Activated naive CD4-positive, alpha-beta T cell treated with anti-CD3 and anti-CD28 coated beads for 36 hours (primary cell): ENCODE measurements at regions of chr12 and their contacts with region 1.

Region 1: GRCh38 chr12:48795480-48796455 is 6.9 kb upstream of the ADCY6 start:
- DNase-seq: peak; percentile 74
- H3K4me3 Mint-ChIP-seq: no peak overlapping the region
- H3K27ac Mint-ChIP-seq: no peak overlapping the region
- H3K4me1 Mint-ChIP-seq: no peaks in the 10 kb centered on the region
- H3K27me3 Mint-ChIP-seq: peaks cover 8% of the 10 kb centered on the region

Region 2: DNA sequence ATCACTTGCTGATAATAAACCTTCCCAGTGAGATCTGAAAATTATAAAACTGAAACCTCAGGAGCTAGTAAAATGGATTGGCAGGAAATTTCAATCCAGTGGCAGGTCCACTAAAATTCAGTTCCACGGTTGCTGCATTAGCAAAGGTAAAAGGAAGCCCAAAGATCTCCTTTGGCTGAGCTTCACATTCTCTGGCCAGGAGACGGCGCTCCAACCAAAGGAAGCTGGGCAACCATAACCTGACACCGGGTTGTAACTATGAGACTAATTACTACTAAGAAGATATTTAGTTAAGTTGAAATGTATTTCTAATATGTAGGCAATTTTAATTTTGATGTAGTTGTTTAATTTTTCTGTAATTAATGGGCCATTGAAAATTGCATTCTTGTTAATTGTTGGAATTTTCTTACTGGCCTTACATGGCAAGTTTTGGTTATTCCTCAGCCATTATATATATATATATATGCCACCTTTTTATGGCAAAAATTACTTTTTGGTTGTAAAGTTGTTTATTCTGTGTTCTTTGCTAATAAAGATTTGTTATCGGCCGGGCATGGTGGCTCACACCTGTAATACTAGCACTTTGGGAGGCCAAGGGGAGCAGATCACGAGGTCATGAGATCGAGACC is 253.4 kb before region 1 on chr12:
- CTCF ChIA-PET with region 1: interaction called, 30 read pairs
- intact Hi-C with region 1: loop called (anchors 1 kb)
- DNase-seq: peak; percentile 83
- H3K4me3 Mint-ChIP-seq: no peak overlapping the region
- H3K27ac Mint-ChIP-seq: no peak overlapping the region
- H3K4me1 Mint-ChIP-seq: peaks cover 14% of the 10 kb centered on the region
- H3K27me3 Mint-ChIP-seq: no peaks in the 10 kb centered on the region

Region 3: DNA sequence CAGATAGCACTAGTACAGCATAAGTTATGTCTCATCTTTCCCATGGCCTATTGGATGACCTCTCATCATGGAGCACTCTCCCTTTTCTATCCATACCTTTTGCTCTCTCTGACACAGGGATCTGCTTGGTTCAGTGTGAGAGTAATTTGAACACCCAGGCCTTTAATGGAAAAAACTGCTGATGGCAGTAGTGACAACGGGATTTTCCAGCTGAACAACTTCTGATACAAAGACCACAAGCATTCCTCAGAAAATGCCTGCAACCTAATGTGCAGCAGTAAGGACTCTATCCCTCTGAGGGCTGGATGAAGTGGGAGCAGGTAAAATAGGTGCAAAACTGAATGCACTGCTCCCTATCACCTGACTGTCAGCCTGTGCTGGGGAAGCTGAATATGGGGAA is 164.7 kb before region 1 on chr12:
- CTCF ChIA-PET with region 1: no interaction called
- intact Hi-C with region 1: loop called (anchors 5 kb)
- DNase-seq: no peak
- H3K4me3 Mint-ChIP-seq: no peak overlapping the region
- H3K27ac Mint-ChIP-seq: no peak overlapping the region
- H3K4me1 Mint-ChIP-seq: no peaks in the 10 kb centered on the region
- H3K27me3 Mint-ChIP-seq: peaks cover 4% of the 10 kb centered on the region

Region 4: GRCh38 chr12:48681738-48682532 is 113.8 kb before region 1 on chr12 and contains the start of gene KANSL2:
- CTCF ChIA-PET with region 1: no interaction called
- intact Hi-C with region 1: loop called (anchors 5 kb)
- DNase-seq: peak; percentile 99
- H3K4me3 Mint-ChIP-seq: peak within 1 kb of the TSS; percentile 98
- H3K27ac Mint-ChIP-seq: peak within 1 kb of the TSS; percentile 93
- H3K4me1 Mint-ChIP-seq: peaks cover 49% of the 10 kb centered on the region
- H3K27me3 Mint-ChIP-seq: no peaks in the 10 kb centered on the region
- total RNA-seq, gene KANSL2: 37.9 to 39.1 TPM

Region 5: GRCh38 chr12:48750769-48751735 is 44.7 kb before region 1 on chr12:
- CTCF ChIA-PET with region 1: interaction called, 184 read pairs
- intact Hi-C with region 1: loop called (anchors 1 kb)
- DNase-seq: peak; percentile 28
- H3K4me3 Mint-ChIP-seq: no peak overlapping the region
- H3K27ac Mint-ChIP-seq: peak overlapping the region; percentile 82
- H3K4me1 Mint-ChIP-seq: peaks cover 19% of the 10 kb centered on the region
- H3K27me3 Mint-ChIP-seq: no peaks in the 10 kb centered on the region

Region 6: DNA sequence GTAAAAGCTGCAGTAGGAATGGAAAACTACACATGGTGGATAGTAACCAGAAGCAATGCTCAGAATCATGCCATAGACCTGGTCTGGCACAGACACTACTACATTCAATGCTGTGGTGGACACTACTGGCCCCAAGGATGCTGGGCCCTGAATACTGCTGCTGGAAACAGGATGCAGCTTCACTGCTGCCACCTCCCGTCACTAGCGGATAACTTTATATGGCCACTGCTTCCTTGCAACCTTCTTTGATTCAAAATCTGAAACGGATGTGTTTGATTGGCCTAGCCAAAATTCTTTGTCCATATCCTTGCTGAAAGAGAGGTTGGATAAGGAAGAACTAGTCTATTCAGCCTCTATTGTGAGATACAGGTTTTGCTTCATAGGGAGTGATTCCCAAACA is 37.5 kb before region 1 on chr12:
- CTCF ChIA-PET with region 1: interaction called, 184 read pairs
- intact Hi-C with region 1: loop called (anchors 1 kb)
- DNase-seq: no peak
- H3K4me3 Mint-ChIP-seq: no peak overlapping the region
- H3K27ac Mint-ChIP-seq: no peak overlapping the region
- H3K4me1 Mint-ChIP-seq: peaks cover 2% of the 10 kb centered on the region
- H3K27me3 Mint-ChIP-seq: no peaks in the 10 kb centered on the region